Dorsolateral prefrontal cortex (tissue), 120 donors: ENCODE measurements at regions of chr12 and their contacts with region 1.

Region 1: GRCh38 chr12:24584032-24584675 is 364.7 kb downstream of the BCAT1 start:
- DNase-seq: no peak
- H3K4me3 ChIP-seq: no peak overlapping the region
- H3K27ac ChIP-seq: no peak overlapping the region
- H3K27me3 ChIP-seq: no peaks in the 10 kb centered on the region
- CTCF ChIP-seq: no peak

Region 2: DNA sequence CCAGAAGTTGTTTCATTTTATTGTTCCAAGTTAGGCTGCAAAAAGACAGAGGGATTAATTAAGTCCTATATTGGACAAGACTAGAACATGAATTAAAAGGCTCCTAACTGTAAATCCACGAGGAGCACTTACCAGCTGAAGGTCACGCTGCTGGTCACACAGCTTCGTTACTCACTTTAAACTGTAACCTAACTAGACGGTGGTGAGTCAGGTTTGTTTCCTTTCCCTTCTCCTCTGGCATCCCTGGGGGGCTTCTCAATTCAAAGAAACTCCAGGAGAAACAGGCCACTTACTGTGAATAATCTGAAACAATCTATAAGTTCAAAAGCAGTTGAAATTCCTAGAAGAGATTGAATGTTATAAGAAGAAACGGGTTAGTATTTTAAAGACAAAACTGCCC is 33.3 kb after region 1 on chr12:
- intact Hi-C with region 1: loop called in 1 of 2 experiments (anchors 2 kb)
- DNase-seq: no peak
- H3K4me3 ChIP-seq: no peak overlapping the region
- H3K27ac ChIP-seq: no peak overlapping the region
- H3K27me3 ChIP-seq: no peaks in the 10 kb centered on the region
- CTCF ChIP-seq: no peak

Region 3: DNA sequence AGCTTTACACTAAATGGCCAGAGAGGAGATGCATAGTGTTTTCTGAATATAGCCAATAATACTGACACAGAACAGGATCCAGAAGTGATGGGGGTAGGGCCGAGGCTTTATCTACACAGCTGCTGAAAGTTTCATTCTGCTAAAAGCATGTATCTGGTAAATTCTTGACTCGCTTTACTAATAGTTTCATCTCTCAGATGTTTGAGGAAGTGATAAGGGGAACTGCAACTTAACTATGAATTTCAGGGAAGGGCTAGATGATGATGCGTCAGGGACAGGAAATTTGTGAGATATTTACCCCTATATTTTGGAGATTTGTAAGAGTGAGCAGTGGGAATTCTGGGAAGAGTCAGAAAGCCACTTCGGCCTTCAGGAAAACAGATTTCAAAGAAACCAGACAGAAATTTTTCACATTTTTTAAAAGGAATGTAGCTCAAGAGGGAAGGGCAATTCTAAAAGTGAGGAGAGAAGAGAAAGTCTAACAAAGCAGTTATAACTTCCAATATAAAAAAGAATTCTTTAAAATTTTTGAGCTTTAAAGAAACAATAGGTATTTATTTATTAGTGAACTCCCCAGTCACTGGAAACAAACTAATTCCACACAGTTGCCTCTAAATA is 121.7 kb after region 1 on chr12:
- intact Hi-C with region 1: no loop called
- DNase-seq: no peak
- H3K4me3 ChIP-seq: no peak overlapping the region
- H3K27ac ChIP-seq: no peak overlapping the region
- H3K27me3 ChIP-seq: no peaks in the 10 kb centered on the region
- CTCF ChIP-seq: no peak